ENCODE measurements at regions of chr3 and their contacts with region 1.

Region 1: GRCh38 chr3:159260049-159260662 is 458.3 kb downstream of the MFSD1 start:
- DNase-seq: peak; percentile 45 to 57
- H3K4me3 ChIP-seq: no peak overlapping the region
- H3K27ac ChIP-seq: no peak overlapping the region
- H3K4me1 ChIP-seq: no peaks in the 10 kb centered on the region
- H3K27me3 ChIP-seq: no peaks in the 10 kb centered on the region
- CTCF ChIP-seq: peak; percentile 91

Region 2: GRCh38 chr3:158790901-158791589 is 469.1 kb before region 1 on chr3:
- CTCF ChIA-PET with region 1: interaction called, 4 read pairs
- POLR2A ChIA-PET with region 1: no interaction called
- intact Hi-C with region 1: loop called (anchors 1 kb)
- DNase-seq: peak in 1 of 2 experiments; percentile 64
- H3K4me3 ChIP-seq: peak overlapping the region; percentile 25; the same call in 1 of the 2 replicates
- H3K27ac ChIP-seq: no peak overlapping the region
- H3K4me1 ChIP-seq: peaks cover 59% of the 10 kb centered on the region
- H3K27me3 ChIP-seq: no peaks in the 10 kb centered on the region
- CTCF ChIP-seq: peak; percentile 90

Region 3: GRCh38 chr3:159486586-159486985 is 226.4 kb after region 1 on chr3:
- CTCF ChIA-PET with region 1: no interaction called
- POLR2A ChIA-PET with region 1: no interaction called
- intact Hi-C with region 1: loop called (anchors 10 kb)
- DNase-seq: peak in 1 of 2 experiments; percentile 20
- H3K4me3 ChIP-seq: no peak overlapping the region
- H3K27ac ChIP-seq: no peak overlapping the region
- H3K4me1 ChIP-seq: no peaks in the 10 kb centered on the region
- H3K27me3 ChIP-seq: no peaks in the 10 kb centered on the region
- CTCF ChIP-seq: peak; percentile 53

Region 4: DNA sequence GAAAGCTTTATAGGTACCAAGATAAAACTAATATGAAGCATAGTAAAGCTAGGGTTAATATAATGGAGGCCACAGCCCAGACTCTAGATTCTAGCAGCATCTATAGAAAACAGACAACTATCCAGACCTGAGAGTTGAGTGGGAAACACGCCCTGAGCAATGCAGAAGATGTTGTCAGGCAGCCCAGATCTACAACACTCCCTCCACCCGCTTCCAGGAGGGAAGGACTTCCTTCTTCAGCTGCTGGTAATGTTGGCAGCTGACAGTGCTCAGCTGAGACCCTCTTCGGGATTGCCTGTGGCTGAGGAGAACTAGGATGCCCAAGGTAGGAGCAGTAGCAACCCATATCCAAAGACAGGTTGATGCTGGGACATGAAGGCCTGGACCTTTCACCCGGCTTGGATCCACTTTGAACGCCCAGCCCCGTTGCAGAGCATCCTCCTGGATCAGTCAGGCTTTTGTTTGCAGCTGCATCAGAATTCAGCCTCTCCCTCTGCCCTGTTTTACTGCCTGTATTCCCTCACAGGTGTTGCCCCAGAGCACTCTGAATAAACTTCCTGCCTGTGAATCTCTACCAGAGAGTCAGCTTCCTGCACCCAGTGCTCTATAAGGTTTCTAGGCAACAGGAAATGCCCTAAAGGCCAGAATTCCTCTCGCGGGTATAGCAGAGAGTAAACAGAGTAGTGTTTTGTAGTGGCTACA is 553.8 kb after region 1 on chr3:
- CTCF ChIA-PET with region 1: interaction called, 11 read pairs
- POLR2A ChIA-PET with region 1: no interaction called
- intact Hi-C with region 1: no loop called
- DNase-seq: peak; percentile 79 to 97
- H3K4me3 ChIP-seq: 0 out of 2 replicates have a peak overlapping the region, but pooled peaks have one; percentile 18
- H3K27ac ChIP-seq: peak overlapping the region; percentile 52
- H3K4me1 ChIP-seq: peaks cover 51% of the 10 kb centered on the region
- H3K27me3 ChIP-seq: no peaks in the 10 kb centered on the region
- CTCF ChIP-seq: no peak

Region 5: GRCh38 chr3:159929435-159930141 is 669.4 kb after region 1 on chr3:
- CTCF ChIA-PET with region 1: no interaction called
- POLR2A ChIA-PET with region 1: no interaction called
- intact Hi-C with region 1: loop called (anchors 5 kb)
- DNase-seq: peak; percentile 51 to 93
- H3K4me3 ChIP-seq: peak overlapping the region; percentile 27; the same call in 1 of the 2 replicates
- H3K27ac ChIP-seq: peak overlapping the region; percentile 94
- H3K4me1 ChIP-seq: peaks cover 46% of the 10 kb centered on the region
- H3K27me3 ChIP-seq: no peaks in the 10 kb centered on the region
- CTCF ChIP-seq: peak; percentile 62

Region 6: DNA sequence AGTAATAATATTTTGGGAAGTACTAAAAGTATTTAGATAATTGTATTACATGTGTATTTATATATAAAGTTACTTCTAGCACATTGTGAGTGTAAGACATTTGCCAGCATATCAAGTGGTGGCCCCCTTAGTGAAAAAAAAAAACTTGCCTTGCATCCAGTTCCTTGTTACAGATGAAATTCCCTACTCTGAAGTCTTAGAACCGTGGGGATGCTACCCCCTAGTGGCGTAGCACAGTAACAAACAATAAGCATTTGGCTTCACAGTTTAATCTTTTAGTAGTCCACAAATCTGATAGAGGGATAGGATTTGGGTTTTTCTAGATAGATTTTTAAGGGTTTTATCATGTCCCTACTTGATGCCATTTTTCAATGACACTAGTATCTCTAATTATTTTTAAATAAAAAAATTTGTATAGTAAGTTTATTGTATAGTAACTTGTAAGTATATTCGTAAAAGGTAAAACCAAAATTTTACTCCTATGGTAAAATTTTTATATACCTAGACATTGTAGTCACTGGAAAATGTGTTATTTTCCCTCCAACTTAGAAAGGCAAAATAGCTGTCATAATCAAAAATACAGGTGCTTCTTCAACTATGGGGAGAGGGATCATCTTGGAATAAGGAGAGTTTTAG is 1153.6 kb after region 1 on chr3:
- CTCF ChIA-PET with region 1: interaction called, 6 read pairs
- POLR2A ChIA-PET with region 1: no interaction called
- intact Hi-C with region 1: loop called (anchors 1 kb)
- DNase-seq: peak; percentile 61 to 67
- H3K4me3 ChIP-seq: no peak overlapping the region
- H3K27ac ChIP-seq: no peak overlapping the region
- H3K4me1 ChIP-seq: no peaks in the 10 kb centered on the region
- H3K27me3 ChIP-seq: no peaks in the 10 kb centered on the region
- CTCF ChIP-seq: peak; percentile 94